ENCODE measurements at regions of chr2 and their contacts with region 1.

Region 1: GRCh38 chr2:166297951-166298350 is 77.8 kb downstream of the SCN9A start:
- DNase-seq: no peak
- H3K4me3 ChIP-seq: no peak overlapping the region
- H3K27ac ChIP-seq: no peak overlapping the region
- H3K4me1 ChIP-seq: no peaks in the 10 kb centered on the region
- H3K27me3 ChIP-seq: no peaks in the 10 kb centered on the region
- CTCF ChIP-seq: no peak

Region 2: GRCh38 chr2:165203689-165204559 is 1094.0 kb before region 1 on chr2 and contains the start of gene SCN3A:
- CTCF ChIA-PET with region 1: no interaction called
- POLR2A ChIA-PET with region 1: no interaction called
- intact Hi-C with region 1: no loop called
- DNase-seq: peak in 1 of 2 experiments; percentile 10
- H3K4me3 ChIP-seq: no peak within 1 kb of the TSS
- H3K27ac ChIP-seq: no peak within 1 kb of the TSS
- H3K4me1 ChIP-seq: no peaks in the 10 kb centered on the region
- H3K27me3 ChIP-seq: no peaks in the 10 kb centered on the region
- CTCF ChIP-seq: peak; percentile 66
- total RNA-seq, gene SCN3A: not detected in 2 replicates

Region 3: GRCh38 chr2:166314022-166314759 is 16.2 kb after region 1 on chr2:
- CTCF ChIA-PET with region 1: no interaction called
- POLR2A ChIA-PET with region 1: no interaction called
- intact Hi-C with region 1: loop called (anchors 2 kb)
- DNase-seq: peak in 1 of 2 experiments; percentile 33
- H3K4me3 ChIP-seq: no peak overlapping the region
- H3K27ac ChIP-seq: no peak overlapping the region
- H3K4me1 ChIP-seq: no peaks in the 10 kb centered on the region
- H3K27me3 ChIP-seq: no peaks in the 10 kb centered on the region
- CTCF ChIP-seq: no peak

Measured in PC-9 (cell line).